ENCODE measurements at regions of chrX and their contacts with region 1.

Region 1: GRCh38 chrX:102863735-102864134 is 73.3 kb upstream of the RAB40AL start:
- DNase-seq: peak; percentile 63 to 86 (median 76)
- ATAC-seq: peak; percentile 90
- H3K4me3 ChIP-seq: no peak overlapping the region
- H3K4me3 Mint-ChIP-seq: no peak overlapping the region
- H3K27ac ChIP-seq: no peak overlapping the region
- H3K27ac Mint-ChIP-seq: no peak overlapping the region
- H3K4me1 ChIP-seq: no peaks in the 10 kb centered on the region
- H3K4me1 Mint-ChIP-seq: no peaks in the 10 kb centered on the region
- H3K27me3 ChIP-seq: no peaks in the 10 kb centered on the region
- H3K27me3 Mint-ChIP-seq: no peaks in the 10 kb centered on the region
- CTCF ChIP-seq: peak; percentile 79

Region 2: DNA sequence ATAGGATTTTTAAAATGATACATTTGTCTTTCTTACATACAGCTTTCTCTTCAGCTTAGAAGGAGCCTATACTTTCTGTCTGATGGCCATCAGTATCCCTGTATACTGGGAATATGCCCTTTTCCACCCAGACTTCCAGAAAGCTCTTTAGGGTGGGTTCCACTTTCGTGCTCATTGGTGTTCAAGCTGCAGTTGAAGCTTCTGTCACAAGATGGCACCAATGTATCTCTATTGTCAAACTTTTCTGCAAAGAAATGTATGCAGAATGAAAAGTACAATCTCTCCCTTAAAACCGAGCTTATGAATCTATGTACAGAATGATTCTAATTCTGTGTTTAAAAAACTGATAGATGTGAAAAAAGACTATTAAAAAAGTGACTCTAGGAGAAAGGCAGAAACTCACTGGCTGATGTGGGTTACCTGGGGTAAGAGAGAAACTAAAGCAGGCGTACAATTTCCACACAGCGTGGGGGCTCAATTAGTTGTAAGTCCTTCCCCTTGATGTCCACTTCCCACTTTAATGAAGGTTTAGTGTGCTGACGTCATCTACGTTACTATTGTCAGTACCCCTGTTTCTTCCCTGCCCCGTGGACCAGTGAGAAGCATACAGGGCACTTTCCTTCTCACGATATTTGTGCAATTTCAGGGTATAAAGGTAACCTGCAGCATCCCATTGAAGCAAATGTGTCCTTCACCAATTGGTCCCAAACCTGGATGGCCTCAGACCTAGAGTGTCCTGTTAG is 795.6 kb before region 1 on chrX:
- CTCF ChIA-PET with region 1: no interaction called
- POLR2A ChIA-PET with region 1: no interaction called
- intact Hi-C with region 1: loop called (anchors 5 to 10 kb)
- DNase-seq: peak in 5 of 14 experiments; percentile 2 to 40 (median 18)
- ATAC-seq: no peak
- H3K4me3 ChIP-seq: no peak overlapping the region
- H3K4me3 Mint-ChIP-seq: no peak overlapping the region
- H3K27ac ChIP-seq: no peak overlapping the region
- H3K27ac Mint-ChIP-seq: no peak overlapping the region
- H3K4me1 ChIP-seq: no peaks in the 10 kb centered on the region
- H3K4me1 Mint-ChIP-seq: no peaks in the 10 kb centered on the region
- H3K27me3 ChIP-seq: no peaks in the 10 kb centered on the region
- H3K27me3 Mint-ChIP-seq: peaks cover 9% of the 10 kb centered on the region
- CTCF ChIP-seq: peak; percentile 46

Region 3: DNA sequence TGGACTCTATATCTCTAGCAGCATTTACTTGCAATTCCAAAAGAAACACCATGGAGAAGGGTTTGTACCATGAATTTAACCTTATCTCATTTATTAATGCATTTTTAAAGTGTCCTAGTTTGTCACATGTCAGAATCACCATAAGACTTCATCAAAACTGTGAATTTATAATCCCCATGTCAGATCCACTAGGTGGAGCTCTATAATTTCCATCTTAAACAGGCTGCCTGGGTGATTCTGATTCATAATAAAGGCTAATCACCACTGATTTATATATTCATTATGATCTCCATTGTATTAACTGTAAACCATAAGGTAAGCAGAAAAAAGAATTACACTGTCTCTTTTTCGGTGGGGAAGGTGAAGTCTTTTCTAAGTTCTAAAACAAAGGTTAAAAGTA is 734.3 kb before region 1 on chrX:
- CTCF ChIA-PET with region 1: no interaction called
- POLR2A ChIA-PET with region 1: no interaction called
- intact Hi-C with region 1: loop called (anchors 2 to 10 kb)
- DNase-seq: peak in 3 of 14 experiments; percentile 2 to 10 (median 9)
- ATAC-seq: no peak
- H3K4me3 ChIP-seq: no peak overlapping the region
- H3K4me3 Mint-ChIP-seq: no peak overlapping the region
- H3K27ac ChIP-seq: no peak overlapping the region
- H3K27ac Mint-ChIP-seq: no peak overlapping the region
- H3K4me1 ChIP-seq: peaks cover 5% of the 10 kb centered on the region
- H3K4me1 Mint-ChIP-seq: peaks cover 5% of the 10 kb centered on the region
- H3K27me3 ChIP-seq: peaks cover 0 to 9% of the 10 kb centered on the region in 2 experiments
- H3K27me3 Mint-ChIP-seq: peaks cover 59% of the 10 kb centered on the region
- CTCF ChIP-seq: peak; percentile 48

Region 4: DNA sequence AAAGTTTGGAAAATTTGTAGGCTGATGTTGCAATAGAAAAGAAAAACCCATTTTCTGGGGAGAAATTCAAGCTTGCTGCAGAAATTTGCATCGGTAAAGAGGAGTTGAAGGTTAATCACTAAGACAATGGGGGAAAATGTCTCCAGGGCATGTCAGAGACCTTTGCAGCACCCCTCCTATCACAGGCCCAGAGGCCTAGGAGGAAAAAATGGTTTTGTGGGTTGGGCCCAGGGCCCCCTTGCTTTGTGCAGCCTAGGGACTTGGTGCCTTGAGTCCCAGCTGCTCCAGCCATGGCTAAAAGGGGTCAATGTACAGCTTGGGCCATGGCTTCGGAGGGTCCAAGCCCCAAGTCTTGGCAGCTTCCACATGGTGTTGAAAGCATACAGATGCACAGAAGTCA is 365.0 kb before region 1 on chrX:
- CTCF ChIA-PET with region 1: no interaction called
- POLR2A ChIA-PET with region 1: no interaction called
- intact Hi-C with region 1: loop called in 1 of 2 experiments (anchors 10 kb)
- DNase-seq: no peak
- ATAC-seq: no peak
- H3K4me3 ChIP-seq: no peak overlapping the region
- H3K4me3 Mint-ChIP-seq: no peak overlapping the region
- H3K27ac ChIP-seq: no peak overlapping the region
- H3K27ac Mint-ChIP-seq: no peak overlapping the region
- H3K4me1 ChIP-seq: no peaks in the 10 kb centered on the region
- H3K4me1 Mint-ChIP-seq: no peaks in the 10 kb centered on the region
- H3K27me3 ChIP-seq: no peaks in the 10 kb centered on the region
- H3K27me3 Mint-ChIP-seq: no peaks in the 10 kb centered on the region
- CTCF ChIP-seq: no peak

Region 5: GRCh38 chrX:102546828-102547493 is 316.8 kb before region 1 on chrX:
- CTCF ChIA-PET with region 1: no interaction called
- POLR2A ChIA-PET with region 1: no interaction called
- intact Hi-C with region 1: no loop called
- DNase-seq: peak in 6 of 14 experiments; percentile 0 to 18 (median 4)
- ATAC-seq: peak; percentile 43
- H3K4me3 ChIP-seq: peak overlapping the region; percentile 60
- H3K4me3 Mint-ChIP-seq: peak overlapping the region; percentile 86
- H3K27ac ChIP-seq: no peak overlapping the region
- H3K27ac Mint-ChIP-seq: no peak overlapping the region
- H3K4me1 ChIP-seq: peaks cover 3% of the 10 kb centered on the region
- H3K4me1 Mint-ChIP-seq: no peaks in the 10 kb centered on the region
- H3K27me3 ChIP-seq: no peaks in the 10 kb centered on the region
- H3K27me3 Mint-ChIP-seq: peaks cover 22% of the 10 kb centered on the region
- CTCF ChIP-seq: no peak

Region 6: GRCh38 chrX:103175944-103176753 is 312.4 kb after region 1 on chrX:
- CTCF ChIA-PET with region 1: no interaction called
- POLR2A ChIA-PET with region 1: no interaction called
- intact Hi-C with region 1: no loop called
- DNase-seq: peak; percentile 22 to 70 (median 45)
- ATAC-seq: peak; percentile 79
- H3K4me3 ChIP-seq: no peak overlapping the region
- H3K4me3 Mint-ChIP-seq: peak overlapping the region; percentile 49
- H3K27ac ChIP-seq: no peak overlapping the region
- H3K27ac Mint-ChIP-seq: no peak overlapping the region
- H3K4me1 ChIP-seq: peaks cover 3% of the 10 kb centered on the region
- H3K4me1 Mint-ChIP-seq: peaks cover 4% of the 10 kb centered on the region
- H3K27me3 ChIP-seq: no peaks in the 10 kb centered on the region
- H3K27me3 Mint-ChIP-seq: peaks cover 23% of the 10 kb centered on the region
- CTCF ChIP-seq: peak; percentile 66

Measured in CD4-positive, alpha-beta T cell (primary cell).